Heart left ventricle (tissue), 16 donors: ENCODE measurements at regions of chr3 and their contacts with region 1.

Region 1: DNA sequence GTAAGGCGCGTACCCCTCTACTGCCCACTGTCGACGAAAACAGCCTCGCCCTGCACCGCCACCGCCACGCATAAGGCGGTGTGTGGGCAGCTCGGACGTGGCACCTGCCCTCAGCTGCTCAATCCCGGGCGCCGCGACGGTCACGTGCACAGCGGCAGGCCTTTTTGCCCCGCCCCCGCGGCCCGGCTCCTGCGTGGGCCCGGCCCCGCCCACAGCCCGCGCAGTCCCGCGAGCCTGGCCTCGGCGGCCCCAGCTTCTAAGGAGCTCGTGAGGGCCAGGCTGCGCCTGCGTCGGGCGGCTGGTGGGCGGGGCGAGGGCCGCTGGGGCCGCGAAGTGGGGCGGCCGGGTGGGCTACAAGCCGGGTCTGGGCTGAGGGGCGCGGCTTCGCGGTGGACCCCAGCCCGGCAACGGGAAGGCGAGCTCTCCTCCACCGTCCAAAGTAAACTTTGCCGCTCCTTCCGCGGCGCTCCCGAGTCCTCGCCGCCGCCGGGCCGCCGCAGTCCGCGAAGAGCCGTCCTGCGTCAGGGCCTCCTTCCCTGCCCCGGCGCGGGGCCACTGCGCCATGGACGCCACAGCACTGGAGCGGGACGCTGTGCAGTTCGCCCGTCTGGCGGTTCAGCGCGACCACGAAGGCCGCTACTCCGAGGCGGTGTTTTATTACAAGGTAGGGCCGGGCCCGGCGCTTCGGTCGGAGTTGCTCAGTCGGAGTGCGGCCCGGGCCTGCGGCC is at the start of gene CAPN7:
- DNase-seq: peak; percentile 95 to 98 (median 97)
- ATAC-seq: peak; percentile 93 to 99 (median 98)
- H3K4me3 ChIP-seq: peak within 1 kb of the TSS; percentile 58 to 98 (median 84)
- H3K27ac ChIP-seq: peak within 1 kb of the TSS; percentile 90 to 98 (median 96)
- H3K4me1 ChIP-seq: peaks cover 0 to 45% (median 27%) of the 10 kb centered on the region in 12 donors
- H3K27me3 ChIP-seq: no peaks in the 10 kb centered on the region
- CTCF ChIP-seq: peak; percentile 5 to 58 (median 34)
- POLR2A ChIP-seq: peak; percentile 72 to 94
- total RNA-seq, gene CAPN7: 15.4 to 38.2 (median 24.9) TPM

Region 2: GRCh38 chr3:15108082-15108545 is 98.0 kb before region 1 on chr3:
- intact Hi-C with region 1: loop called in 5 of 10 experiments (anchors 2 to 10 kb)
- DNase-seq: peak; percentile 60 to 87 (median 68)
- ATAC-seq: peak; percentile 63 to 82 (median 78)
- H3K4me3 ChIP-seq: no peak overlapping the region
- H3K27ac ChIP-seq: no peak overlapping the region
- H3K4me1 ChIP-seq: peaks cover 0 to 11% (median 4%) of the 10 kb centered on the region in 12 donors
- H3K27me3 ChIP-seq: no peaks in the 10 kb centered on the region
- CTCF ChIP-seq: peak; percentile 78 to 93 (median 88)
- POLR2A ChIP-seq: no peak

Region 3: DNA sequence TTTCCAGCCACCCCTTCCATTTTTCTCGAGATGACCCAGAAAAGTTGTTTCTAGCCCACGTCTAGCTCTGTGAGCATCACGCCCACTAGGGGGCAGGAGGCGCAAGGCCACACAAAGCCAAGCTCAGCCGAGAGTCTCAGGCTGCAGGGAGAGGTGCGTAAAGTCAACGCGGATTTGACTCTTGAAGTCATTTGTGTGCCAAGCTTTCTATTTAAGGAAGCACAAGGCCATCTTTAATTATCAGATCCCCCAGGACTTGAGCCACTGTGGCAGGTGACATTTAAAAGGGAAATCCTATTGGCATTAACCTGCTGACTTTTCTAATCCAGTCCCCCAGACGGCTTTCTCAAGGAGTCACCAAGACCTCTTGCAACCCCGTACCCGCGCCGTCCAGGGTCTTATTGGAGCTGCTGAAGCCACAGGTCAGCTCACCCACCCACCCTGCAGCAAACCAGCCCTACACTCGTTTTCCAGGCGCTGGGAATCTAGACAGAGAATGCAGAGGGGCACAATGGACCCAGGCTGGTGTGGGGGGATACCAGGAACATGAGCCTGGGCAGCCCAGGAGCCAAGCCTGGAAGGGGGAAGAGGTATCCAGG is 62.0 kb after region 1 on chr3:
- intact Hi-C with region 1: loop called in 1 of 10 experiments (anchors 5 kb)
- DNase-seq: peak; percentile 85 to 91 (median 86)
- ATAC-seq: peak; percentile 68 to 76 (median 73)
- H3K4me3 ChIP-seq: no peak overlapping the region
- H3K27ac ChIP-seq: peak overlapping the region in 4 of 12 donors; percentile 17 to 79 (median 54)
- H3K4me1 ChIP-seq: peaks cover 0 to 56% (median 19%) of the 10 kb centered on the region in 12 donors
- H3K27me3 ChIP-seq: no peaks in the 10 kb centered on the region
- CTCF ChIP-seq: peak; percentile 88 to 98 (median 95)
- POLR2A ChIP-seq: no peak

Region 4: GRCh38 chr3:15405448-15406050 is 199.5 kb after region 1 on chr3:
- intact Hi-C with region 1: loop called (anchors 2 to 10 kb)
- DNase-seq: no peak
- ATAC-seq: peak in 3 of 4 donors; percentile 49 to 77 (median 68)
- H3K4me3 ChIP-seq: no peak overlapping the region
- H3K27ac ChIP-seq: no peak overlapping the region
- H3K4me1 ChIP-seq: peaks cover 0 to 18% (median 0%) of the 10 kb centered on the region in 12 donors
- H3K27me3 ChIP-seq: no peaks in the 10 kb centered on the region
- CTCF ChIP-seq: peak; percentile 49 to 74 (median 64)
- POLR2A ChIP-seq: no peak

Region 5: DNA sequence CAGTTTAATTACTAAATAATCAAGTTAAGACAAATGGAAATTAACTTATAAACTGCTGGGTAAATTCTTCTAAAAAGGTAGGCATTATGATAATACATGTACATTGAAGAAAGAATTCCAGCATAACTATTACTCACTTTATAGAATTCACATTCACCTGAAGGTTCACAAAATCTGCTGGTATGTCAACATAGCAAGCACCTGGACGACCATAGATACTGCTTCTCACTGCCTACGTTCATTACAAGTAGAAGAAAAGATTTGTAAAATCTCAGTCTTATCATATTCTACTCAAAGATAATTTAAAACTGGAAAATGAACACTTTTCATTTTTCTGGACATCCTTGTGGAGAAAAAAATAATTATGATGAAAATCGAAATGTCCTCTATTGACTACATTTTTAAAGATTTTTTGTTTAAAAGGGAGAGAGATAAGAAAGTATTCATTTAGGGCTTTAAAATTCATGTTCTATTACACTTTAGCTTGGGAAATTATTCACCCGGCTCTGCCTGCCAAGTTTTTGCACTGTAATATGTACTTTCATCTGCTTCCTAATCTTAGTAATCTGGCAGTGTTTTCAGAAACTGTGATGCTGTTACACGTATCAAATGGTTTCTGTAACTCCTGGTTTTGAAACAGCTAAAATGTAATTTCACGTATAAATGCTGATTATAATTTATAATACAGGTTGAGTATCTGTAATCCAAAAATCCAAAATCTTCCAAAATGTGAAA is 379.2 kb after region 1 on chr3:
- intact Hi-C with region 1: no loop called
- DNase-seq: no peak
- ATAC-seq: no peak
- H3K4me3 ChIP-seq: no peak overlapping the region
- H3K27ac ChIP-seq: no peak overlapping the region
- H3K4me1 ChIP-seq: no peaks in the 10 kb centered on the region
- H3K27me3 ChIP-seq: no peaks in the 10 kb centered on the region
- CTCF ChIP-seq: no peak
- POLR2A ChIP-seq: no peak